ENCODE measurements at regions of chr1 and their contacts with region 1.

Region 1: DNA sequence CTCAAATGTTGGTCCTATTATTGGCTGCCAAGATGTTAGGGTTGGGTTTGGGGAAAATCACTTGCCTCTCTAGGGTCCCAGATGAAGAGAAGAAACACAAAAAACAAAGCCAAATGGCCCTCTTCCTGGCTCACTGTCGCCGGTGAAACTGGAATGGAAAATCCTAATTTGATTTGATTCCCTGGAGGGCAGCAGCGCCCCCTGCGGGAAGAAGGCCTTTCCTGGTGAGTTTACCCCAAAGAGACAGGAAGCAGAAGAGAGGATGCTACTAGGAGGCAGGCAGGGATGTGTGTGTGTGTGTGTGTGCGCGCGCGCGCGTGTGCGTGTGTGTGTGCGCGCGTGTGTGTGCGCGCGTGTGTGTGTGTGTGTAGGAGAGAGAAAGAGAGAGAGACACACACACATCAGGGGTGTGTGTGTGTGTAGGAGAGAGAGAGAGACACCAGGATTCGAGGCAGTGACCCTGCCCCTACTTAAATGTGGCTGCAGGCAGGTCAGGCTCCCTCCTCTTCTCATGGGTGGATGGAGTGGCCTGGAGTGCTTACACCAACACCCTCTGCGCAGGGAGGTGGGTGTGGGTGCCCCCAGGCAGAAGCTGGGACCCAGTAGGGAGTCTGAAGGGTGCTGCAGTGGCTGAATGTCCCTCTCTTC is 3.1 kb upstream of the SELENON start:
- DNase-seq: peak; percentile 96
- H3K4me3 Mint-ChIP-seq: peak overlapping the region; percentile 76
- H3K27ac Mint-ChIP-seq: peak overlapping the region; percentile 75
- H3K4me1 Mint-ChIP-seq: peaks cover 58% of the 10 kb centered on the region
- H3K27me3 Mint-ChIP-seq: no peaks in the 10 kb centered on the region

Region 2: DNA sequence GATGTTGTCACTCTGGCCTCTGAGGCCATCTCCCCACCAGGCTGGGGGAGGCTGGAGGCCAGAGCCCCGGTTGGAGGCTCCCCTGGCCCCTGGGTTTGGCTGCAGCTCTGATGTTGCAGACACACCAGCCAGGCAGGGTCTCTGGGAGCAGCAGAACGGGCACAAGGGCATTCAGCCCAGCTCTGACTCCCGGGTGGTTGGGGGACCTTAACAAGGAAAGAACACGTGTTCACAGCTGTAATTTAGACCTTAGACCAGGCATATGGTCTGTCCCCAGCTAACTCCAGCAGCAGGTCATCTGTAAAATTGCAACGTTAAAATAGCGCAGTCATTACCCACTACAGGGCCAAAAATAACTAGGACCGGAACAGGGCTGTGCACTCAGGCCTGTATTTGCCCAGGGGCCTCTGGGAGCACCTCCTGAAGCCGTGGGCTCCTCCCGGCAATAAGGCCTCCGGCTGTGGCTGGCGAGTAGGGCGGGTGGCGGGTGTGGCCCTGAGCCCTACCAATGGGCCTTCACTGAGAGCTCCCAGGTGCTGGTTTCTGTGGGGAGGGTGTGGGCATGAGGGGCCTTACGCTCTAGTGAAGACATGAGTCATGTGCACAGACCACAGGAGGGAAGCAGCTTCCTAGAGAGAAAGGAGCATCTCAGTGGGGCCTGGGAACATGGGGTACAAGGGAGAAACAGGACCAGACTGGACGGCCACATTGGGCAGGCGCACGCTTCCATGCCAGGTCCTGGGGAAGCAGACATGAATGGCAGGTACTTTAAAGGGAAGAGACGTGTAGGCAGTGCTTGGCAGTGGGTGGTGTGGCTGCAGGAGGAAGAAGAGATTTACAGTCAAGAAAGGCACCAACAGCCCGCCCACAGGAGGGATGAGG is 247.4 kb before region 1 on chr1:
- CTCF ChIA-PET with region 1: interaction called, 5 read pairs
- intact Hi-C with region 1: loop called (anchors 5 kb)
- DNase-seq: peak; percentile 95
- H3K4me3 Mint-ChIP-seq: peak overlapping the region; percentile 71
- H3K27ac Mint-ChIP-seq: peak overlapping the region; percentile 93
- H3K4me1 Mint-ChIP-seq: peaks cover 89% of the 10 kb centered on the region
- H3K27me3 Mint-ChIP-seq: no peaks in the 10 kb centered on the region

Region 3: DNA sequence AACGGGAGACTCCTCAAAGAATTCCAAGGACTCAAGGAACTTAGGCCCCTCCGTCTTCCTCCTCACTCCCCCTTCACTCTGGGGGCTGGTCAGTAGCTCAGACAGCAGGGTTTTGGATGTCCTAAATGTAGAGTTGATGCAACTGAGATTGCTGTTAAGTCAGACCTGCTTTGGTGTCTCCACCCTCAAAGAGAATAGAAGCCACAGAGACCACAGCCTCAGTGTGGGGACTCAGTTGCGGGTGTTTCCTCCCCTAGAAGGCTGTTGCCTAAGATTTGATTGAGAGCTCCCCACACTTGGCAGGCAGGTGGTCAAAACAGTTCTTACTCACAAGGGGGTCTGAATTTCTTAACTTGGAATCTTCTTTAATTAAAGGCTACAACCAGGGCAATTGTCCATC is 172.8 kb before region 1 on chr1:
- CTCF ChIA-PET with region 1: interaction called, 32 read pairs
- intact Hi-C with region 1: loop called (anchors 2 kb)
- DNase-seq: peak; percentile 63
- H3K4me3 Mint-ChIP-seq: no peak overlapping the region
- H3K27ac Mint-ChIP-seq: no peak overlapping the region
- H3K4me1 Mint-ChIP-seq: peaks cover 80% of the 10 kb centered on the region
- H3K27me3 Mint-ChIP-seq: no peaks in the 10 kb centered on the region

Region 4: GRCh38 chr1:25711555-25712298 is 85.2 kb before region 1 on chr1:
- CTCF ChIA-PET with region 1: no interaction called
- intact Hi-C with region 1: loop called (anchors 5 kb)
- DNase-seq: peak; percentile 80
- H3K4me3 Mint-ChIP-seq: peak overlapping the region; percentile 44
- H3K27ac Mint-ChIP-seq: peak overlapping the region; percentile 74
- H3K4me1 Mint-ChIP-seq: peaks cover 71% of the 10 kb centered on the region
- H3K27me3 Mint-ChIP-seq: no peaks in the 10 kb centered on the region

Region 5: GRCh38 chr1:25774921-25775801 is 21.8 kb before region 1 on chr1:
- CTCF ChIA-PET with region 1: interaction called, 7 read pairs
- intact Hi-C with region 1: loop called (anchors 1 kb)
- DNase-seq: peak; percentile 97
- H3K4me3 Mint-ChIP-seq: peak overlapping the region; percentile 65
- H3K27ac Mint-ChIP-seq: peak overlapping the region; percentile 84
- H3K4me1 Mint-ChIP-seq: peaks cover 70% of the 10 kb centered on the region
- H3K27me3 Mint-ChIP-seq: no peaks in the 10 kb centered on the region

Region 6: GRCh38 chr1:26239936-26240335 is 443.0 kb after region 1 on chr1:
- CTCF ChIA-PET with region 1: no interaction called
- intact Hi-C with region 1: no loop called
- DNase-seq: no peak
- H3K4me3 Mint-ChIP-seq: no peak overlapping the region
- H3K27ac Mint-ChIP-seq: no peak overlapping the region
- H3K4me1 Mint-ChIP-seq: peaks cover 31% of the 10 kb centered on the region
- H3K27me3 Mint-ChIP-seq: no peaks in the 10 kb centered on the region

Region 7: DNA sequence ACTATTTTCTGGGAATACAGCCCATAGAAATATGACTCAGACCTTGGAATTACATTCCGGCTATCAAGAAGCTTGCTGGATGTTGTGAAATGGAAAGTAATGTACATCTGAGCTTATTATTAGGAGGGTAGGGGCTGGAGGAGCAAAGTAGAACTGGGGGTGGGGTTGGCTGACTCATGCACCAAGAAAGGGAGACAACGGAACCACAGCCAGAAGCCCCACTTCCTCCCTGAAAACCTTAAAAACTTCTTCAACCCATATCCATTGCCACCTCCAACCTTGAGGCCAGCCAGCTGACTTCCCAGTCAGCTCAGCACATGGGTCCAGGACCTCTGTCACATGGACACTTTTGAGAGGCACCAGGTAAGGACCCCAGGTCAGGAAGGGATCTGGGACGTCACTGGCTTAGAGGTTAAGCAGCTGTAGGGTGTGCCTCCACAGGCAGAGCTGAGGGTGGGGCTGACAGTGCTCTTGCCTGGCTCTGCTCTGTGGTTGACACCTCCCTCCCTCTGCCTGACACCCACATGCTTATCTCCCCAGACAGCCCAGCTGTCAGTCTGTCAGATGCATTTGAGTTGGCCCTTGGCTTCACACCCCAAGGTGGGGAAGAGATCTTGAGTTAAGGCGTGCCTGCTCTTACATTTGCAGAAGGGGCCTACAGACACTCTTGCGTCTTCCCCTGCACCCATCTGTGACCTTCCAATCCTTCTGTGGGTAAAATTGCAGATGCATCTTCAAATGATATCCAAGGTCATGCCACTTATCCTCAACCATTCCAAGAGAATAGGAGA is 581.3 kb after region 1 on chr1:
- CTCF ChIA-PET with region 1: no interaction called
- intact Hi-C with region 1: no loop called
- DNase-seq: peak; percentile 66
- H3K4me3 Mint-ChIP-seq: no peak overlapping the region
- H3K27ac Mint-ChIP-seq: peak overlapping the region; percentile 53
- H3K4me1 Mint-ChIP-seq: peaks cover 54% of the 10 kb centered on the region
- H3K27me3 Mint-ChIP-seq: no peaks in the 10 kb centered on the region

Region 8: GRCh38 chr1:26555550-26556510 is 758.9 kb after region 1 on chr1:
- CTCF ChIA-PET with region 1: no interaction called
- intact Hi-C with region 1: no loop called
- DNase-seq: no peak
- H3K4me3 Mint-ChIP-seq: no peak overlapping the region
- H3K27ac Mint-ChIP-seq: peak overlapping the region; percentile 53
- H3K4me1 Mint-ChIP-seq: no peaks in the 10 kb centered on the region
- H3K27me3 Mint-ChIP-seq: no peaks in the 10 kb centered on the region